ENCODE measurements at regions of chr11 and their contacts with region 1.

Region 1: DNA sequence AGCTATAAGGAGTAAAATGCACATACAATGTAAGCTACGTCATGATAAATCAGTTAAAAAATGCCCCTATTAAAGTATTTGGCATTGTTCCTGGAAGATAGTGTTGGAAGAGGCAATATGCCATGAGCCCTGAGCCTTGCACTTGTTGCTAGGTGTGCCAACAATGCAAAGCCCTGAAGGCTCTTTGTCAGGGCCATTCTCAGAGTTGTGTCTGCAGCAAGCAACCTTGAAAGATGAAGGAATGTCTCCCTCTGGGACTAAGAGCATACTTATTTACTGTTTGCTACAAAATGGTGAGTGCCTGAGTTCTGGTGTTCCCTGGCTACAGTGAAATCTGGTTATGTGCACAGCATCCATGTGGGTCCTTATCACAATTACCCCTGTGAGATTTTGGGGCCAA is 322.3 kb upstream of the FAT3 start:
- DNase-seq: no peak
- ATAC-seq: no peak
- H3K4me3 ChIP-seq: no peak overlapping the region
- H3K4me3 Mint-ChIP-seq: no peak overlapping the region
- H3K27ac ChIP-seq: no peak overlapping the region
- H3K27ac Mint-ChIP-seq: no peak overlapping the region
- H3K4me1 ChIP-seq: no peaks in the 10 kb centered on the region
- H3K4me1 Mint-ChIP-seq: no peaks in the 10 kb centered on the region
- H3K27me3 ChIP-seq: no peaks in the 10 kb centered on the region
- H3K27me3 Mint-ChIP-seq: no peaks in the 10 kb centered on the region
- CTCF ChIP-seq: no peak

Region 2: DNA sequence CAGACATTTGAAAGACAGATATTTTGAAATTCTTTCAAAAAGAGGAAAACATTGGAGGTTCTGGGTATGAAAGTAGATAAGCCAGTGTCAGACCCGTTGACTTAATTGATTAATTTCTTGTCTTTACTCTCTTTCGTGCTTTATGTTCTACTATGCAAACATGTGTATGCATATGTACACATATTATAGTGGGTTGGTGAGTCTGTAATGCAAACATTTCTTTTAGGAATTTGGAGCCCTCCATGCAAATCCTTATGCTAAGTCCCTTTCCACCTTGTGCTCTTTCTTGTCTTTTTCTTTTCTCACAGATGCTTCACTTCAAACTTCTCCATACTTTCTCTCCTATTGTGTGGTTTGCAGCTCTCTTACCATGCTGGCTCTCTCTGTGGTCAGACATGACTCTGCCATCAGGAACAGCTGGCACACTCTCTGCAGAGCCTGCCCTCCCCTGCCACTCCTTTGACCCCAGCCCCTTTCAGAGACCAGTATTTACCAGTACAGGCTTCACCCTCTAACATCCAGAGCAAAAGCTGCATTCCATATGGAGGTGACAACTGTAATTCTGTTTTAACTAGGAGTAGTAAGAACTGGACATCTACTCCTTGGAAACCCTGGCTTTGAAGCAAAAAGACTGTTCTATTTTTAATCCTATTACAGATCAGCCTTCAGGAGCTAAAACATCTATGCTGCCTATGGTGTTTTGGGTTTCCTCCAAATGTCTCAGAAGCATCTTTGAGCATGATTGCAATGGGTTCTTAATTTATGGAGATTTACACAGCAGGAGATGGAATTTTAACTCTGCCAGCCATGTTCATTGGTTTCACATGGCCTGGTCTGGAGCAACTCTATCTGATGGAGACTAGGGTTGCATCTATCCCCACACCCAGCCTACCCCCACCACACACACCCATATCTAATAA is 64.6 kb before region 1 on chr11:
- intact Hi-C with region 1: loop called (anchors 10 kb)
- DNase-seq: no peak
- ATAC-seq: no peak
- H3K4me3 ChIP-seq: no peak overlapping the region
- H3K4me3 Mint-ChIP-seq: no peak overlapping the region
- H3K27ac ChIP-seq: no peak overlapping the region
- H3K27ac Mint-ChIP-seq: no peak overlapping the region
- H3K4me1 ChIP-seq: no peaks in the 10 kb centered on the region
- H3K4me1 Mint-ChIP-seq: no peaks in the 10 kb centered on the region
- H3K27me3 ChIP-seq: no peaks in the 10 kb centered on the region
- H3K27me3 Mint-ChIP-seq: no peaks in the 10 kb centered on the region
- CTCF ChIP-seq: no peak

Region 3: GRCh38 chr11:91913407-91913806 is 11.1 kb after region 1 on chr11:
- intact Hi-C with region 1: no loop called
- DNase-seq: no peak
- ATAC-seq: no peak
- H3K4me3 ChIP-seq: no peak overlapping the region
- H3K4me3 Mint-ChIP-seq: no peak overlapping the region
- H3K27ac ChIP-seq: no peak overlapping the region
- H3K27ac Mint-ChIP-seq: no peak overlapping the region
- H3K4me1 ChIP-seq: no peaks in the 10 kb centered on the region
- H3K4me1 Mint-ChIP-seq: no peaks in the 10 kb centered on the region
- H3K27me3 ChIP-seq: no peaks in the 10 kb centered on the region
- H3K27me3 Mint-ChIP-seq: no peaks in the 10 kb centered on the region
- CTCF ChIP-seq: no peak